GM10248 (cell line): ENCODE measurements at regions of chr12 and their contacts with region 1.

Region 1: DNA sequence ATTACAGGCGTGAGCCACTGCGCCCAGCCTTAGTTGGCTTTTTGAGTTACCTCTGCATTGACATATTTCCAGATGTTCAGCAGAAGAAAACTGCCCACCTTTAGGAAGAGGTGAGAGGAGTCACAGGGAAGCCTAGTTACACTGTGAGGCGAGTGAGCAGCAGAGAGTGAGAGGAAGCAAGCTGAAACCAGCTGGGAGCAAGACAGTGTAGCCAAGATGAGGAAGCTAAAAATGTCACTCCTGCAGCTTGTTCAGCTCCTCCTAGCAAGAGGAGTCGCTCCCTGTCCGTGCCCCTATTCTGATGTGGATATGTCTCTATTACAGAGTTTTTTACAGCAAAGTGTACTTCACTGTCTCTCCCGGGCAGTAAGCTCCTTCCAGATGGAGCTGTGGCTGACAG is 127.6 kb downstream of the GXYLT1 start:
- DNase-seq: no peak
- CTCF ChIP-seq: no peak

Region 2: DNA sequence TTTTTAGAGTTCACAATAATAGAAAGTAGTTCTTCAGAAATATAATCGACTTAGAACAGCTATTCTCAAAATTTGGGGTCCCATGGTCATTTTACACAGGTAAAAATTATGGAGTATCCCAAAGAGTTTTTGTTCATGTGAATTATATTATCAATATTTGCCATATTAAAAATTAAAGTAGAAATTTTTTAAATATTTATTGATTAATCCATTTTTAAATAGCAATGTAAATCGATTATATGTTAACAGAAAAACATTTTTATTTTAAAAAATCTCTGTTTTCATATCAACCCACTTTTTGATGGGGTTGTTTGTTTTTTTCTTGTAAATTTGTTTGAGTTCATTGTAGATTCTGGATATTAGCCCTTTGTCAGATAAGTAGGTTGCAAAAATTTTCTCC is 195.4 kb before region 1 on chr12:
- CTCF ChIA-PET with region 1: no interaction called
- POLR2A ChIA-PET with region 1: no interaction called
- DNase-seq: no peak
- CTCF ChIP-seq: no peak

Region 3: GRCh38 chr12:42002563-42002962 is 14.5 kb before region 1 on chr12:
- CTCF ChIA-PET with region 1: interaction called, 13 read pairs
- POLR2A ChIA-PET with region 1: no interaction called
- DNase-seq: no peak
- CTCF ChIP-seq: no peak